HepG2 (cell line): ENCODE measurements at regions of chr1 and their contacts with region 1.

Region 1: DNA sequence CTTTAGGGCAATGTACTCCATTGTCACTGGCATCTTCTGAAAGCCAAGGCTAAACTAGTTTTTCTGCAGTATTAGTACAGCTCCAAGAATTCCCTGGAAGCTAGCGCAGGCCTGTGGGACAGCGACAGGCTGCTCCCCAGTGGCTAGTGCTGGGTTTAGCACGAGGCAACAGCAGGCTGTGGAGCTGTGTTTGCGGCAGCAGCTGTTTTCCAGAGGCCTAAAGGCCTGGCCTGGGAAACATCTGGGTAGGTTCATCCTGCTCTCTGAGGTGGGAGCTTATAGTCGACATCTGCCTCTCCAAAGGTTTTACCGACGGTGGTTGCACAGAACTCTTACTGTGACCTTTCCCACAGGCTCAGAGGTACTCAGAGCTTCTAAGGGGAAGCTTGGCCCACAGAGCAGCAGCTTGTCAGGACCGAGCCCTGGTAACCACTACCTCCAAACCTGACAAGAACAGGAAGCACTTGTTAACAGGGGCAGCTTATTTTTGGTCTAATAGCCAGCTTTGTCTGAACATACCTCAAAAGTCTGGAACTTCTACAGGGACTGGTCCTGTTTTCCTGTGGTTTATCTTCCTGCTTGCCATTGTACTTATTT is 17.2 kb downstream of the CC2D1B start:
- DNase-seq: no peak
- ATAC-seq: peak; percentile 84
- H3K4me3 ChIP-seq: no peak overlapping the region
- H3K27ac ChIP-seq: no peak overlapping the region
- H3K4me1 ChIP-seq: peaks cover 16% of the 10 kb centered on the region
- H3K27me3 ChIP-seq: no peaks in the 10 kb centered on the region; a peak in 1 of 5 replicates
- CTCF ChIP-seq: peak; percentile 66
- EP300 ChIP-seq: no peak
- POLR2A ChIP-seq: no peak; a peak in 1 of 4 replicates
- RAD21 ChIP-seq: peak; percentile 58; the same call in 1 of the 2 replicates

Region 2: DNA sequence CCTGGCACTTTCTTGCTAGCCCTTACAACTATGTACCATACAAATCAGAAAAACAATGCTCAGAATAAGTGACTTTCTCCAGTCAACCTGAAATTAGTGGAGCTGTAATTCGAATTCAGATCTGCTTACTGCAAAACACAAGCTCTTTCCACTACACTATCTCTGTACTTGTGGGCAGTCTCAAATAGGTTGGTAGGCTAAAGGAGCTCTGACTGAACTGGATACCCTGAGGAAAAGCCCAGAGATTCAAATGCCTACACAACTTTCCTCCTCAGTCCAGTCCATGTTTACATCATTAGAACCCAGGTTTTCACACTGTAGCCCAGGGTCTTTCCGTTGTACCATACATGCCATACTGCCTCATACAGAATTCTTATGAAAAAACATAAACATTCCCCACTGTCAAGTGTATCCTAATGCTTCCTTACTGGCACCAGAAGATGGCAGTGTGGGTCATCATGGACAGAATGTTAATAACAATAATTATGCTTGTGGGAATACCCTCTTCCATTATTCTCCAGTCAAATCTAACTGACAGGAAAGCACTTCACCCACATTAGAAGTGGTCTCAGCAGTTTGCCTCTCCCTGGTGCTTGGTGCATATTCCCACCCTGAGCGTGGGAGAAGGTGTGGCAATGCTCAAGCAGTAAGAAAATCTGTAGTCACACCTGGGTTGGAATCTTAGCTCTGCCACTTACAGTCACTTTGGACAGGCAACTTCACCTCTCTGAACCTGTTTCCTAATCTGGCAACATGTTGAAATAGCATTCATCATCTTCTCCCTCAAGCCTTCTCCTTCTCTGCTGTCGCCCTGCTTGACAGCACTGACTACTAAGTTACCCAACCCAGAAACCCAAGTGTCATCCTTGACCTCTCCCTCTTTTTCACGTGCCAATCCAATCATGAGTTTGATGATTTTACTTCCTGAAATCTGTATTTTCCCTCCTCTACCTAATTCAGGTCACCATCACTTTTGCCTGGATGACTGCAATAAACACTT is 221.3 kb before region 1 on chr1:
- CTCF ChIA-PET with region 1: no interaction called
- POLR2A ChIA-PET with region 1: no interaction called
- in situ Hi-C with region 1: no loop called
- intact Hi-C with region 1: loop called (anchors 5 kb)
- DNase-seq: peak; percentile 62
- ATAC-seq: peak; percentile 94
- H3K4me3 ChIP-seq: no peak overlapping the region
- H3K27ac ChIP-seq: no peak overlapping the region
- H3K4me1 ChIP-seq: peaks cover 16% of the 10 kb centered on the region
- H3K27me3 ChIP-seq: no peaks in the 10 kb centered on the region
- CTCF ChIP-seq: peak; percentile 79
- EP300 ChIP-seq: no peak
- POLR2A ChIP-seq: no peak
- RAD21 ChIP-seq: peak; percentile 68

Region 3: GRCh38 chr1:52141513-52142219 is 207.1 kb before region 1 on chr1 and contains the start of gene ZFYVE9:
- CTCF ChIA-PET with region 1: no interaction called
- POLR2A ChIA-PET with region 1: no interaction called
- in situ Hi-C with region 1: no loop called
- intact Hi-C with region 1: no loop called
- DNase-seq: peak; percentile 56
- ATAC-seq: peak; percentile 93
- H3K4me3 ChIP-seq: peak within 1 kb of the TSS; percentile 91 to 93 (median 93)
- H3K27ac ChIP-seq: peak within 1 kb of the TSS; percentile 83
- H3K4me1 ChIP-seq: peaks cover 57% of the 10 kb centered on the region
- H3K27me3 ChIP-seq: no peaks in the 10 kb centered on the region; a peak in 1 of 5 replicates
- CTCF ChIP-seq: peak; percentile 81
- EP300 ChIP-seq: no peak
- POLR2A ChIP-seq: peak in 1 of 2 experiments; percentile 39; a peak in 2 of 4 replicates
- RAD21 ChIP-seq: peak; percentile 98
- total RNA-seq, gene ZFYVE9: 19.8 and 26.5 TPM in 2 replicates

Region 4: GRCh38 chr1:52365746-52366516 is 17.1 kb after region 1 on chr1 and contains the start of gene CC2D1B:
- CTCF ChIA-PET with region 1: no interaction called
- POLR2A ChIA-PET with region 1: interaction called, 22 read pairs
- in situ Hi-C with region 1: no loop called
- intact Hi-C with region 1: no loop called
- DNase-seq: peak; percentile 95
- ATAC-seq: peak; percentile 93
- H3K4me3 ChIP-seq: peak within 1 kb of the TSS; percentile 98 to 100 (median 99)
- H3K27ac ChIP-seq: peak within 1 kb of the TSS; percentile 83
- H3K4me1 ChIP-seq: peaks cover 45% of the 10 kb centered on the region
- H3K27me3 ChIP-seq: no peaks in the 10 kb centered on the region; a peak in 1 of 5 replicates
- CTCF ChIP-seq: peak; percentile 21; the same call in 1 of the 2 replicates
- EP300 ChIP-seq: no peak
- POLR2A ChIP-seq: peak; percentile 82 to 93
- RAD21 ChIP-seq: peak; percentile 30
- total RNA-seq, gene CC2D1B: 11.5 and 19.2 TPM in 2 replicates